MCF 10A (cell line): ENCODE measurements at regions of chr4 and their contacts with region 1.

Region 1: DNA sequence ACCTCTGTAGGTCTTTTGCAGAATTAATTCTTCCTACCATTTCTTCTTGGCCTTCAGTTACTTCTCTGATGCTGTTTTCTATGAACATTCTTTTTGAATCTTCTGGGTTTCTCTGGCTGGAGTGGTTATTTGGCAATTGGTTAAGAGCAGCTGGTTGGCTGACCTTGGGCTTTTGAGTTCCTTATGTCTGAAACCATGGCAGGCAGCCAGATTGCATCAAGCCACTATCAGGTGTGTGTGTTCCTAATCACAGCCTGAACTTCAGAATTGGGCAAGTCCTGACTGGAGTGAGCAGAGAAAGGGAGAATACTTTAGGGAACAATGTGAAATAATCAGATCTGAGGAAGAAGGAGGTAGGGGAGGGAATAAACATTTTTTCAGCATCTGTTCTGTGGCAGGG is 90.2 kb downstream of the ARHGAP10 start:
- DNase-seq: peak; percentile 99
- H3K4me3 Mint-ChIP-seq: peak overlapping the region; percentile 54
- H3K27ac Mint-ChIP-seq: peak overlapping the region; percentile 81
- H3K4me1 Mint-ChIP-seq: peaks cover 53% of the 10 kb centered on the region
- H3K27me3 Mint-ChIP-seq: no peaks in the 10 kb centered on the region
- CTCF ChIP-seq: no peak

Region 2: DNA sequence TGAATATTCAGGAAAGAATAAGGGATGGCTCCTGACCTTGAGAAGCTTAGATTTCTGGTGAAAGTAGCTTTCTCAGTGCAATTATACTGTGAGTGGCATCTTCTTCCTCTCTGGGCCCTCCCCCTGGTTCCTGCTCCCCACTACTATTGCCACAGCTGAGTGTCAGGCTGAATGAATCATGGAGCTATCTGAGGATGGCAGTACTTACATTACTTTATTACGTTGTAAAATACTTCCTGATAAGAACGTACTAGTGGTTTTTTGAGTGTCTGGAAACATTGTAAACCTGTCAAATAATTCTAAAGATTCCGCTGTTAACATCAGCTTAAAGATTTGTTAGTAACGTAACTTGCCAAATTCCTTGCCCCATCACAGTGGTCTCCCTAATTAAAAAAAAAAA is 54.0 kb before region 1 on chr4:
- CTCF ChIA-PET with region 1: interaction called, 4 read pairs
- POLR2A ChIA-PET with region 1: interaction called, 14 read pairs
- intact Hi-C with region 1: no loop called
- DNase-seq: peak; percentile 57
- H3K4me3 Mint-ChIP-seq: no peak overlapping the region
- H3K27ac Mint-ChIP-seq: no peak overlapping the region
- H3K4me1 Mint-ChIP-seq: peaks cover 34% of the 10 kb centered on the region
- H3K27me3 Mint-ChIP-seq: no peaks in the 10 kb centered on the region
- CTCF ChIP-seq: no peak

Region 3: GRCh38 chr4:147811878-147812277 is 10.2 kb before region 1 on chr4:
- CTCF ChIA-PET with region 1: interaction called, 12 read pairs
- POLR2A ChIA-PET with region 1: interaction called, 4 read pairs
- intact Hi-C with region 1: no loop called
- DNase-seq: no peak
- H3K4me3 Mint-ChIP-seq: no peak overlapping the region
- H3K27ac Mint-ChIP-seq: no peak overlapping the region
- H3K4me1 Mint-ChIP-seq: peaks cover 29% of the 10 kb centered on the region
- H3K27me3 Mint-ChIP-seq: no peaks in the 10 kb centered on the region
- CTCF ChIP-seq: no peak